ENCODE measurements at regions of chr21 and their contacts with region 1.

Region 1: GRCh38 chr21:15295875-15296274 is 231.1 kb upstream of the NRIP1 start:
- DNase-seq: no peak
- H3K4me3 ChIP-seq: no peak overlapping the region
- H3K27ac ChIP-seq: no peak overlapping the region
- H3K4me1 ChIP-seq: peaks cover 7% of the 10 kb centered on the region
- H3K27me3 ChIP-seq: no peaks in the 10 kb centered on the region
- CTCF ChIP-seq: no peak
- POLR2A ChIP-seq: no peak

Region 2: DNA sequence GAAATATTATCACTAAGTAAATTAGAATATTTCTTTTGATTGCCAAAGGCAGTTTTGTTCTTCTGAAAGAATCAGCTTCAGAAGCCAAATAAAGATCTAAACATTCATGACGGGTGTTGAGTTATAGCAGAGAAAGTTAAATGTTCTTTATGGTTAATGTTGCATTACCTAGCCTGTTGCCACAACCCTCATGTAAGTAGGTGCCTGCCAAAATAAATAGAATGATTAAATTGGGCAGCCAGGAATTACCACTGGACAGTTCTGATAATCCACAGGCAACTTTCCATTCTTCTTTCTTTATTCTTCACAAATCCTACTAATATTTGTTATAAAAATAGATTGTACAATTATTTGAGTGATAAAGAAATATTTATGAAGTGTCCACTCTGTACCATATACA is 13.2 kb before region 1 on chr21:
- CTCF ChIA-PET with region 1: no interaction called
- POLR2A ChIA-PET with region 1: no interaction called
- dilution Hi-C with region 1: no loop called
- intact Hi-C with region 1: no loop called
- DNase-seq: no peak
- H3K4me3 ChIP-seq: no peak overlapping the region
- H3K27ac ChIP-seq: no peak overlapping the region
- H3K4me1 ChIP-seq: no peaks in the 10 kb centered on the region
- H3K27me3 ChIP-seq: peaks cover 0 to 2% of the 10 kb centered on the region in 2 experiments
- CTCF ChIP-seq: no peak
- POLR2A ChIP-seq: no peak

Region 3: DNA sequence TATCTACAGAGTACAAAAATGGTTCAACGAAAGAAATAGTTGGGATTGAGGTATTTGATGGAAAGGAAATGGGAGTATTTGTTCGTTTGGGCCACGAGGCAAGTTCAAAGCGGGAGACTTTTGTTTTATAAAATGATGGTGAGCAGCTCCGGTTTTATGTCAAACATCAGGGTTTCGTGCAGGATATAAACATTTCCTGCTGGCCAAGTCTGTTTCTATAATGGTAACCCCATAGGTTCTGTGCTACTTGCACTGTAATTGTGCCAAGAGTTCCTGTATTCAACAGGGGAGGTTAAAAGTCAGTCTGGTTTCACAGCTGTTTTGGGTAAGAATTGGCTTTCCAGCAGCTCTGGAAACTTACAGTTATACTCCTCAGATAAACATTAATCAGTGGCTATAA is 59.2 kb after region 1 on chr21:
- CTCF ChIA-PET with region 1: no interaction called
- POLR2A ChIA-PET with region 1: no interaction called
- dilution Hi-C with region 1: no loop called
- intact Hi-C with region 1: loop called (anchors 5 kb)
- DNase-seq: peak; percentile 93
- H3K4me3 ChIP-seq: no peak overlapping the region
- H3K27ac ChIP-seq: peak overlapping the region; percentile 17
- H3K4me1 ChIP-seq: peaks cover 32% of the 10 kb centered on the region
- H3K27me3 ChIP-seq: no peaks in the 10 kb centered on the region
- CTCF ChIP-seq: no peak
- POLR2A ChIP-seq: no peak

Region 4: DNA sequence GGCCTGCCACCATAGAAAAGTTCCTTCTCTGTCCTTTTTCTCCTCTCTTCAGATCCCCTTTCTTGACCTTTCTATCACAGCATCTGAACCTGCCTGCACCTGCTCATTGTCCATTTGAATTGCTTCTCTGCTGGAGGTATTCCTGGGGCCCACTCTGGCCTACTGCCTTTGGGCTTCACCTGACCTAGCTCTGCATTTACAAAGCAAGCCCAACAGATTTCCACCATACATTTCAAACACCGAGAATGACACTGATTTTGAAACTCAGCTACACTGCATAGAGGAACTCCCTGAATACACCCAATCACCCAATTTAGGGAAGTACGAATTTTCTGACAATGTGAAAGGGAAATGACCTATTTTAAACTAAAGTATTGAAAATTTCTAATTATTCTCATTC is 149.5 kb after region 1 on chr21:
- CTCF ChIA-PET with region 1: no interaction called
- POLR2A ChIA-PET with region 1: no interaction called
- dilution Hi-C with region 1: no loop called
- intact Hi-C with region 1: no loop called
- DNase-seq: no peak
- H3K4me3 ChIP-seq: no peak overlapping the region
- H3K27ac ChIP-seq: no peak overlapping the region
- H3K4me1 ChIP-seq: no peaks in the 10 kb centered on the region
- H3K27me3 ChIP-seq: no peaks in the 10 kb centered on the region
- CTCF ChIP-seq: no peak
- POLR2A ChIP-seq: no peak

Measured in endothelial cell of umbilical vein (primary cell).